ENCODE measurements at regions of chr12 and their contacts with region 1.

Region 1: GRCh38 chr12:80186727-80187217 is 87.4 kb downstream of the OTOGL start:
- DNase-seq: peak; percentile 50
- H3K4me3 Mint-ChIP-seq: no peak overlapping the region
- H3K27ac Mint-ChIP-seq: no peak overlapping the region
- H3K4me1 Mint-ChIP-seq: no peaks in the 10 kb centered on the region
- H3K27me3 Mint-ChIP-seq: no peaks in the 10 kb centered on the region

Region 2: GRCh38 chr12:79407671-79408622 is 778.8 kb before region 1 on chr12:
- CTCF ChIA-PET with region 1: no interaction called
- intact Hi-C with region 1: loop called (anchors 2 kb)
- DNase-seq: peak; percentile 30
- H3K4me3 Mint-ChIP-seq: no peak overlapping the region
- H3K27ac Mint-ChIP-seq: no peak overlapping the region
- H3K4me1 Mint-ChIP-seq: no peaks in the 10 kb centered on the region
- H3K27me3 Mint-ChIP-seq: no peaks in the 10 kb centered on the region

Region 3: DNA sequence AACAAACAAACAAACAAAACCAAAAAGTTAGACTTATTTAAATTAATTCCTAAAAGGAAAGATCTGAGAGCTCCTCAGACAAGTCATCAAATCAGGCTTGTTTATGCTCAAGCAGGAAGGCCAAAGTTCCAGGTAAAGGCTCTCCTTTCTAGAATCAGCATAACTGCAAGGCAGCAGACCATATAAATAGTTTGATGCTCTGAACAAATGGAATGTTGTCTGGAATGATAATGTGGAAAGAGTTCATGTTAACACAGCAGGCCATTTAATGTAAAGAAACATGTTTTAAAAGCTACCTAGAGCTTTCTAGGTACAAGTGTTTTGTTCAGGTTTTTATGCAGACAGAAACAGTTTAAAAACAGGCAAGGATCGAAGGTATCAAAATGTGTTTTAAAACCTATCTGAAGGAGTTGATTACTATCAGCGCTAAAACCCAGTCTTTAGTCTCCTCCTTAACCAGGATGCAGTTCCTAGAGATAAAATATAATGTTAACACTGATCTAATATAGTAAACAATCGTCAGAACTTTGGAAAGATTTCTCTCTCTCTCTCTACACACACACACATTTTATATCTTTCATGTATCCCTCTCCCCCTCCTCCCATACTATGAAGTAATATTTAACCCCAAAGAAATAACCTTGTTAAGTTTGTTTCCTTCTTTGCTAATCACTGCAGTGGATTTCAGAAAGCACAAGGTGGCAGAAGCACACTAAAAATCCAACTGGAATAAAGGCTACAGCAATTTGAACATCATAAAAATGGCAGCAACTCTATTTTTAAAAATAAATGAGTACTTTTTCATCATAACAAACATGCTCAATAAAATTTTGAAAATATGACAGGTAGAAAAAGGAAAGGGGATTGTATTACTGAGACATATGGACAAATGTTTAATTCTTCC is 631.5 kb before region 1 on chr12:
- CTCF ChIA-PET with region 1: no interaction called
- intact Hi-C with region 1: loop called (anchors 2 kb)
- DNase-seq: peak; percentile 11
- H3K4me3 Mint-ChIP-seq: no peak overlapping the region
- H3K27ac Mint-ChIP-seq: no peak overlapping the region
- H3K4me1 Mint-ChIP-seq: no peaks in the 10 kb centered on the region
- H3K27me3 Mint-ChIP-seq: no peaks in the 10 kb centered on the region

Region 4: GRCh38 chr12:79737875-79738718 is 448.7 kb before region 1 on chr12:
- CTCF ChIA-PET with region 1: no interaction called
- intact Hi-C with region 1: loop called (anchors 5 kb)
- DNase-seq: peak; percentile 43
- H3K4me3 Mint-ChIP-seq: no peak overlapping the region
- H3K27ac Mint-ChIP-seq: no peak overlapping the region
- H3K4me1 Mint-ChIP-seq: no peaks in the 10 kb centered on the region
- H3K27me3 Mint-ChIP-seq: peaks cover 9% of the 10 kb centered on the region

Region 5: GRCh38 chr12:79935021-79935623 is 251.7 kb before region 1 on chr12 and contains the start of gene PPP1R12A:
- CTCF ChIA-PET with region 1: no interaction called
- intact Hi-C with region 1: loop called (anchors 1 kb)
- DNase-seq: peak; percentile 94
- H3K4me3 Mint-ChIP-seq: peak within 1 kb of the TSS; percentile 98
- H3K27ac Mint-ChIP-seq: peak within 1 kb of the TSS; percentile 98
- H3K4me1 Mint-ChIP-seq: peaks cover 28% of the 10 kb centered on the region
- H3K27me3 Mint-ChIP-seq: no peaks in the 10 kb centered on the region
- total RNA-seq, gene PPP1R12A: 56.3 to 63.3 TPM

Region 6: GRCh38 chr12:80217011-80217535 is 30.3 kb after region 1 on chr12:
- CTCF ChIA-PET with region 1: no interaction called
- intact Hi-C with region 1: no loop called
- DNase-seq: no peak
- H3K4me3 Mint-ChIP-seq: no peak overlapping the region
- H3K27ac Mint-ChIP-seq: no peak overlapping the region
- H3K4me1 Mint-ChIP-seq: no peaks in the 10 kb centered on the region
- H3K27me3 Mint-ChIP-seq: peaks cover 9% of the 10 kb centered on the region

Measured in activated naive CD4-positive, alpha-beta T cell treated with anti-CD3 and anti-CD28 coated beads for 36 hours (primary cell).